Gastrocnemius medialis (tissue), 4 donors: ENCODE measurements at regions of chr1 and their contacts with region 1.

Region 1: GRCh38 chr1:208174736-208175515 is 69.3 kb downstream of the PLXNA2 start:
- DNase-seq: no peak
- ATAC-seq: no peak
- H3K4me3 ChIP-seq: no peak overlapping the region
- H3K27ac ChIP-seq: no peak overlapping the region
- H3K4me1 ChIP-seq: peaks cover 41 to 52% of the 10 kb centered on the region in 2 donors
- H3K27me3 ChIP-seq: no peaks in the 10 kb centered on the region
- CTCF ChIP-seq: no peak
- POLR2A ChIP-seq: no peak

Region 2: GRCh38 chr1:208189183-208189582 is 14.3 kb after region 1 on chr1:
- in situ Hi-C with region 1: no loop called
- intact Hi-C with region 1: loop called (anchors 2 kb)
- DNase-seq: no peak
- ATAC-seq: peak; percentile 28 to 39
- H3K4me3 ChIP-seq: no peak overlapping the region
- H3K27ac ChIP-seq: peak overlapping the region in 3 of 4 donors; percentile 8 to 54 (median 39)
- H3K4me1 ChIP-seq: peaks cover 37 to 38% of the 10 kb centered on the region in 2 donors
- H3K27me3 ChIP-seq: no peaks in the 10 kb centered on the region
- CTCF ChIP-seq: no peak
- POLR2A ChIP-seq: no peak